ENCODE measurements at regions of chrX and their contacts with region 1.

Region 1: DNA sequence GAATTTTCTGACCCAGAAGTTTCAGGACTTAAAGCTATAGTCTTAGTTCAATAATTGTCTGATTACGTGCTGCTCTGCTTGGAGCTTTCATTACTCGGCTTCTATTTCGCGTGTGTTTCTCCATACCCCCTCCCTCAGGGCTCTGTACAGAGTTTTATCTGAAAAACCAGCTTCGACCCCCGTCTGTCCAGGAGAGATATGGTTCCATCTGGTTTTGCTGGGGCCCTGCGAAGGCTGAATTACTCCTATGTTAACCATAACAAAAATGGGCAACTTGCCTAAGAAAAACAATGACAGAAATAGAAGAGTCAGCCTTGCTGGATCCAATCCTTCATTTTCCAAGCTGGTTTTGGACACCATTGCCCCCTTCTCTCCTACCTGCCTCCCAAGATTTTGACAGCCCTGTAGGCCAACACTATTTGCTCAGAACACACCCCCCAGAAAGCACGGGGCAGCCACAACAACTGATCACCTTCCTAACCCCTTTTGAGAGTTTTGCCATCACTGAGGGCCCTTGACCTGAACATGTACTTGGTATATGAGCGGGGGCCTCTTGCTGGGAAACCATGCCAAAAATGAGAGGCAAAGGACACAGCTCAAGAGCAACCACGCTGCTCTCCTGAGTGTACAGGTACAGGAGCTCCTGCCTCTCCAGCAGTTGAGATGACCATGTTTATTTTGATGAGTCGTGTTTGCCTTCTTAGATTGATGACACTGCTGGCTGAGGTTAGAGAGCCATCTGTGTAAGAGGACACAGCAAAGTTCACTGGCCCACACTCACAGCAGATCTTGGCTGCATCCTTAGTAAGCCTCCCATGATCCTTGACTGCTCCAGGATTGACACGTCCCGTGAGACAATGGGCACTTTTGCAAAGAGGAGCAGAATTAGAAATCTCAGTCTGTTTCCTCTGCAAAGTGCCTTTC is 36.2 kb upstream of the ATP6AP2 start:
- DNase-seq: peak; percentile 16
- ATAC-seq: peak; percentile 66; the same call in 2 of the 3 replicates
- H3K4me3 ChIP-seq: no peak overlapping the region
- H3K27ac ChIP-seq: no peak overlapping the region
- H3K4me1 ChIP-seq: peaks cover 18% of the 10 kb centered on the region; the same call in 1 of the 2 replicates
- H3K27me3 ChIP-seq: no peaks in the 10 kb centered on the region
- CTCF ChIP-seq: no peak
- EP300 ChIP-seq: no peak
- POLR2A ChIP-seq: no peak
- RAD21 ChIP-seq: no peak

Region 2: GRCh38 chrX:40423299-40423698 is 121.3 kb before region 1 on chrX:
- CTCF ChIA-PET with region 1: no interaction called
- POLR2A ChIA-PET with region 1: no interaction called
- in situ Hi-C with region 1: no loop called
- intact Hi-C with region 1: no loop called
- DNase-seq: no peak
- ATAC-seq: no peak
- H3K4me3 ChIP-seq: no peak overlapping the region
- H3K27ac ChIP-seq: no peak overlapping the region
- H3K4me1 ChIP-seq: peaks cover 10% of the 10 kb centered on the region; the same call in 1 of the 2 replicates
- H3K27me3 ChIP-seq: no peaks in the 10 kb centered on the region
- CTCF ChIP-seq: no peak
- EP300 ChIP-seq: no peak
- POLR2A ChIP-seq: no peak
- RAD21 ChIP-seq: no peak

Region 3: GRCh38 chrX:41250867-41251266 is 706.3 kb after region 1 on chrX:
- CTCF ChIA-PET with region 1: no interaction called
- POLR2A ChIA-PET with region 1: no interaction called
- in situ Hi-C with region 1: no loop called
- intact Hi-C with region 1: loop called (anchors 5 kb)
- DNase-seq: no peak
- ATAC-seq: no peak
- H3K4me3 ChIP-seq: no peak overlapping the region
- H3K27ac ChIP-seq: no peak overlapping the region
- H3K4me1 ChIP-seq: no peaks in the 10 kb centered on the region
- H3K27me3 ChIP-seq: no peaks in the 10 kb centered on the region
- CTCF ChIP-seq: no peak
- EP300 ChIP-seq: no peak
- POLR2A ChIP-seq: no peak
- RAD21 ChIP-seq: no peak